Activated CD4-positive, alpha-beta T cell treated with anti-CD3 and anti-CD28 coated beads, Interleukin-2, amount 10 ng/mL, durations not matched to agents 7 days and 5 days (primary cell): ENCODE measurements at regions of chr1 and their contacts with region 1.

Region 1: GRCh38 chr1:154558575-154559465 is at the start of gene UBE2Q1:
- DNase-seq: peak; percentile 99
- H3K4me3 Mint-ChIP-seq: peak within 1 kb of the TSS; percentile 87
- H3K27ac Mint-ChIP-seq: peak within 1 kb of the TSS; percentile 91
- H3K4me1 Mint-ChIP-seq: peaks cover 42% of the 10 kb centered on the region
- H3K27me3 Mint-ChIP-seq: no peaks in the 10 kb centered on the region
- total RNA-seq, gene UBE2Q1: 106 to 131 TPM

Region 2: GRCh38 chr1:154479764-154480421 is 78.9 kb before region 1 on chr1:
- CTCF ChIA-PET with region 1: interaction called, 11 read pairs
- POLR2A ChIA-PET with region 1: no interaction called
- DNase-seq: peak; percentile 75
- H3K4me3 Mint-ChIP-seq: no peak overlapping the region
- H3K27ac Mint-ChIP-seq: no peak overlapping the region
- H3K4me1 Mint-ChIP-seq: peaks cover 18% of the 10 kb centered on the region
- H3K27me3 Mint-ChIP-seq: peaks cover 10% of the 10 kb centered on the region

Region 3: DNA sequence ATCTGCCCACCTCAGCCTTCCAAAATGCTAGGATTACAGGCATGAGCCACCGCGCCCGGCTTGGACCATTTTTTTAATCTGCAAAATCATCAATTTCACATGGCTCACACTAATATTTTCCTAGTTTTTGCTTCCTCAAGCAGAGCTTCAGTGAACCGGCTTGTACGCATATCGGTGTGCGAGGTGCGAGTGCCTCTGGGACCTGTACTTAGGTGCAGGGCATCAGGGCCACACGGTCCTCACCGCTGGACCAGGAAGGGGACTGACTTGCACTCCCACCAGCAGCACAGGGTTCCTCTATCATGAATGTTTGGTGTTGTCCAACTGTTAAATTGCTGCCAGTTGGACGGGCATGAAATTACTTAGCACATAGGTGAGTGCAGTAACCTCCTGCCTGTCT is 41.2 kb before region 1 on chr1:
- CTCF ChIA-PET with region 1: no interaction called
- POLR2A ChIA-PET with region 1: no interaction called
- DNase-seq: no peak
- H3K4me3 Mint-ChIP-seq: no peak overlapping the region
- H3K27ac Mint-ChIP-seq: no peak overlapping the region
- H3K4me1 Mint-ChIP-seq: no peaks in the 10 kb centered on the region
- H3K27me3 Mint-ChIP-seq: peaks cover 29% of the 10 kb centered on the region

Region 4: GRCh38 chr1:154529304-154529703 is 29.5 kb before region 1 on chr1:
- CTCF ChIA-PET with region 1: no interaction called
- POLR2A ChIA-PET with region 1: no interaction called
- DNase-seq: no peak
- H3K4me3 Mint-ChIP-seq: no peak overlapping the region
- H3K27ac Mint-ChIP-seq: no peak overlapping the region
- H3K4me1 Mint-ChIP-seq: no peaks in the 10 kb centered on the region
- H3K27me3 Mint-ChIP-seq: peaks cover 3% of the 10 kb centered on the region

Region 5: DNA sequence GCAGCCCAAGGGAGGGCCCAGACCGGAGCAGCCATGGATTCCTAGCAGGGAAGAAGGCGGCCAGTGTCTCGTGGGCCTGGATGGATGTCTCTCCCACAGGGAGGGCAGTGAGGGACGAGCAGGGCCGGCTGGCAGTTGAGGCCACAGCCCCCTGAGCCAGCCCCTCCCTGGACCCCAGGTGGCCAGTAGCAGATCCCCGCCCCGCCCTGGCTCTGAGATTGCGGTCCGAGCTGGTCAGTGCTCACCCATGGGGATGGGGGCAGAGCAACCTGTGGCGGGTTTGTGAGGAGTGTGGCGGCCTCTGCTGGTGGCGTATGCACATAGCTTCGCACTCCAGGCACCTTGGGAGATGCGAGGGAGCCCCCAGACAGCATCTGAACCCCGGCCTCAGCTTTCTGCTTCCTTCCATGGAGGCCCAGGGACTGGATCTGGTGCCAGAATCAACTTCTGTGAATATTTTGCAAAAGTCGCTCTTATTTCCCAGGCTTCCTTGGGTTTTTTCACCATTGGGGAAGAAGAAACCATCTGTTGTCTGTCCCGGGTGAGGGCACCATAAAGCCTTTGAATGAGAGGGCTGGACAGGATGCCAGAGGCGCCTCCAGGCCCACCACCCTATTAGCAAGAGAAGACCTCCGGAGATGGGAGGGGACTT is 319.7 kb after region 1 on chr1:
- CTCF ChIA-PET with region 1: interaction called, 11 read pairs
- POLR2A ChIA-PET with region 1: no interaction called
- DNase-seq: peak; percentile 74
- H3K4me3 Mint-ChIP-seq: no peak overlapping the region
- H3K27ac Mint-ChIP-seq: no peak overlapping the region
- H3K4me1 Mint-ChIP-seq: no peaks in the 10 kb centered on the region
- H3K27me3 Mint-ChIP-seq: peaks cover 3% of the 10 kb centered on the region